GM12878 (cell line): ENCODE measurements at regions of chr18 and their contacts with region 1.

Region 1: GRCh38 chr18:63311118-63312018 is 8.2 kb downstream of the BCL2 start:
- DNase-seq: peak; percentile 88
- ATAC-seq: peak; percentile 65
- H3K4me3 ChIP-seq: peak overlapping the region; percentile 98
- H3K27ac ChIP-seq: peak overlapping the region; percentile 90
- H3K4me1 ChIP-seq: peaks cover 34% of the 10 kb centered on the region
- H3K27me3 ChIP-seq: no peaks in the 10 kb centered on the region
- CTCF ChIP-seq: no peak
- EP300 ChIP-seq: peak; percentile 93 to 96; a peak in 3 of 4 replicates
- POLR2A ChIP-seq: no peak; the same call in 1 of the 2 replicates
- RAD21 ChIP-seq: no peak

Region 2: GRCh38 chr18:63138436-63139340 is 172.7 kb before region 1 on chr18:
- CTCF ChIA-PET with region 1: interaction called, 9 read pairs
- POLR2A ChIA-PET with region 1: interaction called, 36 read pairs
- RAD21 ChIA-PET with region 1: interaction called, 63 read pairs
- SMC1A ChIA-PET with region 1: interaction called, 20 read pairs
- in situ Hi-C with region 1: loop called (anchors 5 kb)
- intact Hi-C with region 1: no loop called
- DNase-seq: peak; percentile 94
- ATAC-seq: peak; percentile 58
- H3K4me3 ChIP-seq: peak overlapping the region; percentile 65
- H3K27ac ChIP-seq: peak overlapping the region; percentile 96
- H3K4me1 ChIP-seq: peaks cover 72% of the 10 kb centered on the region
- H3K27me3 ChIP-seq: no peaks in the 10 kb centered on the region
- CTCF ChIP-seq: no peak
- EP300 ChIP-seq: peak in 1 of 2 experiments; percentile 69; a peak in 1 of 4 replicates
- POLR2A ChIP-seq: peak; percentile 74
- RAD21 ChIP-seq: no peak

Region 3: GRCh38 chr18:63161761-63162195 is 149.6 kb before region 1 on chr18:
- CTCF ChIA-PET with region 1: interaction called, 119 read pairs
- POLR2A ChIA-PET with region 1: interaction called, 144 read pairs
- RAD21 ChIA-PET with region 1: interaction called, 172 read pairs
- SMC1A ChIA-PET with region 1: interaction called, 161 read pairs
- in situ Hi-C with region 1: no loop called
- intact Hi-C with region 1: loop called (anchors 2 kb)
- DNase-seq: peak; percentile 98
- ATAC-seq: peak; percentile 60
- H3K4me3 ChIP-seq: peak overlapping the region; percentile 62; the same call in 1 of the 2 replicates
- H3K27ac ChIP-seq: peak overlapping the region; percentile 100
- H3K4me1 ChIP-seq: peaks cover 59% of the 10 kb centered on the region
- H3K27me3 ChIP-seq: no peaks in the 10 kb centered on the region
- CTCF ChIP-seq: no peak
- EP300 ChIP-seq: peak; percentile 98
- POLR2A ChIP-seq: peak; percentile 94
- RAD21 ChIP-seq: peak; percentile 35

Region 4: GRCh38 chr18:63186520-63187222 is 124.7 kb before region 1 on chr18:
- CTCF ChIA-PET with region 1: interaction called, 5 read pairs
- POLR2A ChIA-PET with region 1: interaction called, 8 read pairs
- RAD21 ChIA-PET with region 1: interaction called, 9 read pairs
- SMC1A ChIA-PET with region 1: interaction called, 28 read pairs
- in situ Hi-C with region 1: no loop called
- intact Hi-C with region 1: no loop called
- DNase-seq: no peak
- ATAC-seq: peak; percentile 16
- H3K4me3 ChIP-seq: no peak overlapping the region
- H3K27ac ChIP-seq: peak overlapping the region; percentile 67
- H3K4me1 ChIP-seq: peaks cover 67% of the 10 kb centered on the region
- H3K27me3 ChIP-seq: no peaks in the 10 kb centered on the region
- CTCF ChIP-seq: no peak
- EP300 ChIP-seq: no peak
- POLR2A ChIP-seq: no peak
- RAD21 ChIP-seq: no peak

Region 5: GRCh38 chr18:63267975-63268721 is 43.2 kb before region 1 on chr18:
- CTCF ChIA-PET with region 1: interaction called, 4 read pairs
- POLR2A ChIA-PET with region 1: interaction called, 3 read pairs
- RAD21 ChIA-PET with region 1: interaction called, 5 read pairs
- SMC1A ChIA-PET with region 1: interaction called, 10 read pairs
- in situ Hi-C with region 1: no loop called
- intact Hi-C with region 1: no loop called
- DNase-seq: no peak
- ATAC-seq: peak; percentile 84
- H3K4me3 ChIP-seq: 0 out of 2 replicates have a peak overlapping the region, but pooled peaks have one; percentile 2
- H3K27ac ChIP-seq: peak overlapping the region; percentile 29
- H3K4me1 ChIP-seq: peaks cover 12% of the 10 kb centered on the region
- H3K27me3 ChIP-seq: no peaks in the 10 kb centered on the region
- CTCF ChIP-seq: no peak
- EP300 ChIP-seq: no peak
- POLR2A ChIP-seq: no peak
- RAD21 ChIP-seq: no peak

Region 6: DNA sequence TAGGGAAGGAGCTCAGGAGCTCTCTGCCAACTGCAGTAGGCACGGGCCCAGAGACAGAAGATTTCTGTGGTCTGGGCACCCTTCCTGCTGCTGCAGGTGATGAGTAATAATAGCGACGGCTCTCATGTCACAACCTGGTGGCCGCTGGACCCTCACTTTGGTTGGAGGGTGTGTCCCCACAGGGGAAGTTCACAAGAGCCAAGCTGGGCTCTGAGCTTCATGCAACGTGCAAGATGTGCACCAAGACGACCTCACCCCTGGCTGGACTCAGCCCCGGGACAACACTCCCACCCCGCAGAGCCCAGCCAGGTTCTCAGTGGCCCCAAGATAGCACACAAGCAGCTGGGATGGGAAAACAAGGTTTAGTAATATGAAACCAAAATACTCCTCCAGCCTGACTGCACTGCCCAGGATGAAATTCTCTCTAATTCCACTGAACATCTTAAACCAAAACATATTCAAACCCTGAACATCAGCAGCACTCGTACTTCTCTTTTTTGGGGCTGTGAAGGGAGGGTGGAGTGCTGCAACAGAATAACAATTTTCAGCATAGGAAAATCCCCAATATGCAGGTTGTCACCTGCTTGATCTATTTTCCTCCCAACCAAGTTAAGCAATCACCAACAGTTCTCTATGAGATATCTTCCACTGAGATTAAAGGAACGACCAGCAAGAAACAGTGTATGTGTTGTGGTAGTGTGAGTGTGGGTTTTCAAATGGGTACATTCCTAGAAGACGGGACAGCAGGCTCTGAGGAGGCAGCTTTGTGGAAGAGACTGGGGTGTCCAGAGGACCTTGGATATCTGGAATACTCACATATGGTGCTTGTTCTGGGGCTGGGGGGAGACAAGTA is 18.3 kb before region 1 on chr18:
- CTCF ChIA-PET with region 1: interaction called, 8 read pairs
- POLR2A ChIA-PET with region 1: interaction called, 10 read pairs
- RAD21 ChIA-PET with region 1: interaction called, 27 read pairs
- SMC1A ChIA-PET with region 1: interaction called, 32 read pairs
- in situ Hi-C with region 1: no loop called
- intact Hi-C with region 1: no loop called
- DNase-seq: no peak
- ATAC-seq: peak; percentile 82
- H3K4me3 ChIP-seq: peak overlapping the region; percentile 18; the same call in 1 of the 2 replicates
- H3K27ac ChIP-seq: peak overlapping the region; percentile 76
- H3K4me1 ChIP-seq: peaks cover 24% of the 10 kb centered on the region
- H3K27me3 ChIP-seq: no peaks in the 10 kb centered on the region
- CTCF ChIP-seq: no peak
- EP300 ChIP-seq: no peak
- POLR2A ChIP-seq: no peak
- RAD21 ChIP-seq: 0 out of 2 replicates have a peak, but pooled peaks have one; percentile 6

Region 7: GRCh38 chr18:63339920-63340484 is 28.6 kb after region 1 on chr18:
- CTCF ChIA-PET with region 1: no interaction called
- POLR2A ChIA-PET with region 1: no interaction called
- RAD21 ChIA-PET with region 1: no interaction called
- SMC1A ChIA-PET with region 1: no interaction called
- in situ Hi-C with region 1: no loop called
- intact Hi-C with region 1: no loop called
- DNase-seq: no peak
- ATAC-seq: peak; percentile 82
- H3K4me3 ChIP-seq: no peak overlapping the region
- H3K27ac ChIP-seq: no peak overlapping the region
- H3K4me1 ChIP-seq: no peaks in the 10 kb centered on the region
- H3K27me3 ChIP-seq: no peaks in the 10 kb centered on the region
- CTCF ChIP-seq: peak; percentile 39 to 59 (median 53)
- EP300 ChIP-seq: no peak
- POLR2A ChIP-seq: no peak
- RAD21 ChIP-seq: peak; percentile 57

Region 8: GRCh38 chr18:63376538-63376937 is 65.2 kb after region 1 on chr18:
- CTCF ChIA-PET with region 1: no interaction called
- POLR2A ChIA-PET with region 1: no interaction called
- RAD21 ChIA-PET with region 1: no interaction called
- SMC1A ChIA-PET with region 1: no interaction called
- in situ Hi-C with region 1: no loop called
- intact Hi-C with region 1: no loop called
- DNase-seq: no peak
- ATAC-seq: no peak
- H3K4me3 ChIP-seq: no peak overlapping the region
- H3K27ac ChIP-seq: no peak overlapping the region
- H3K4me1 ChIP-seq: peaks cover 5% of the 10 kb centered on the region
- H3K27me3 ChIP-seq: no peaks in the 10 kb centered on the region
- CTCF ChIP-seq: no peak
- EP300 ChIP-seq: no peak
- POLR2A ChIP-seq: no peak
- RAD21 ChIP-seq: no peak